B cell (primary cell): ENCODE measurements at regions of chr4 and their contacts with region 1.

Region 1: GRCh38 chr4:48047421-48047844 is 30.9 kb downstream of the NIPAL1 start:
- DNase-seq: peak; percentile 87
- ATAC-seq: peak; percentile 95
- H3K4me3 ChIP-seq: peak overlapping the region in 2 of 5 experiments; percentile 8 to 31
- H3K4me3 Mint-ChIP-seq: peak overlapping the region; percentile 57
- H3K27ac ChIP-seq: no peak overlapping the region
- H3K27ac Mint-ChIP-seq: peak overlapping the region; percentile 17
- H3K4me1 ChIP-seq: peaks cover 58 to 60% of the 10 kb centered on the region in 2 donors
- H3K4me1 Mint-ChIP-seq: peaks cover 59% of the 10 kb centered on the region
- H3K27me3 ChIP-seq: peaks cover 0 to 41% (median 19%) of the 10 kb centered on the region in 4 experiments
- H3K27me3 Mint-ChIP-seq: peaks cover 49% of the 10 kb centered on the region
- CTCF ChIP-seq: no peak

Region 2: GRCh38 chr4:47791965-47792364 is 255.5 kb before region 1 on chr4:
- CTCF ChIA-PET with region 1: no interaction called
- POLR2A ChIA-PET with region 1: no interaction called
- intact Hi-C with region 1: no loop called
- DNase-seq: no peak
- ATAC-seq: no peak
- H3K4me3 ChIP-seq: no peak overlapping the region
- H3K4me3 Mint-ChIP-seq: no peak overlapping the region
- H3K27ac ChIP-seq: no peak overlapping the region
- H3K27ac Mint-ChIP-seq: no peak overlapping the region
- H3K4me1 ChIP-seq: no peaks in the 10 kb centered on the region
- H3K4me1 Mint-ChIP-seq: peaks cover 3% of the 10 kb centered on the region
- H3K27me3 ChIP-seq: no peaks in the 10 kb centered on the region
- H3K27me3 Mint-ChIP-seq: peaks cover 4% of the 10 kb centered on the region
- CTCF ChIP-seq: no peak

Region 3: DNA sequence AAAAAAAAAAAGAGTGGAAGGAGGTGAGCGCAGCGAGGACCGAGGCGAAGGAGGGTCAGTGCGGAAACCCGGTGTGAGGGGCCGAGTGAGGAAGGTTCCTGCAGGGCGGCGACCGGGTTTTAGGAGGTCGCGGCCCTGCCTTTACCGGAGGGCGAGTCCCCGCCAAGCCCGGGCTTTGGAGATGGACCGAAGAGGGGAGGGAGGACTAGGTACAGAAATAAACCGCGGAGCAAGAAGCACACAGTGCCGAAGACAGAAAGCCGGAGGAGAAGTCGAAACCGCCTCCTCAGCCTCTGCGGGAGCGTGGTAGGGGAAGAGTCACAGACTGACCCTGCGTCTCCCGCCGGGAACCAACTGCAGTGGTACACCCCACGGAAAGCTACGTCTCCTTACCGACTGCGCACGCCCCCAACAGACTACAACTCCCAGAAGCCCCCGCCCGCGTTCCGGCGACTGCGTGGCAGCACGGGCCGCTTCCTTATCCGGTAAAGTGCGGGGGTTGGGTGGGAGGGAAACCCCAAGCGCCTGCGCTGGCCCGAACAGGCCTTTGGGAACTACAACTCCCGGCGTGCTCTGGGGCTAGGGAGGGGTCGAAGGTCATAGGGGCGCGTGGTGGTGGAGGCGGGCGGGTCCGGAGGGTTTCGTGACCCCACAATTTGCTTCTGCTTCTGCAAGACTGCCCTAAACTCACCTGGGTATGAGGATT is 133.1 kb before region 1 on chr4 and contains the start of gene NFXL1:
- CTCF ChIA-PET with region 1: no interaction called
- POLR2A ChIA-PET with region 1: no interaction called
- intact Hi-C with region 1: loop called (anchors 10 kb)
- DNase-seq: peak; percentile 95
- ATAC-seq: peak; percentile 94
- H3K4me3 ChIP-seq: peak within 1 kb of the TSS; percentile 85 to 100 (median 99)
- H3K4me3 Mint-ChIP-seq: peak within 1 kb of the TSS; percentile 99
- H3K27ac ChIP-seq: peak within 1 kb of the TSS; percentile 48 to 75
- H3K27ac Mint-ChIP-seq: peak within 1 kb of the TSS; percentile 97
- H3K4me1 ChIP-seq: peaks cover 14 to 17% of the 10 kb centered on the region in 2 donors
- H3K4me1 Mint-ChIP-seq: peaks cover 27% of the 10 kb centered on the region
- H3K27me3 ChIP-seq: no peaks in the 10 kb centered on the region
- H3K27me3 Mint-ChIP-seq: no peaks in the 10 kb centered on the region
- CTCF ChIP-seq: no peak
- total RNA-seq, gene NFXL1: 16.5 and 16.6 TPM in 2 replicates

Region 4: GRCh38 chr4:48008021-48008596 is 39.3 kb before region 1 on chr4:
- CTCF ChIA-PET with region 1: interaction called, 9 read pairs
- POLR2A ChIA-PET with region 1: interaction called, 12 read pairs
- intact Hi-C with region 1: loop called (anchors 5 kb)
- DNase-seq: no peak
- ATAC-seq: no peak
- H3K4me3 ChIP-seq: no peak overlapping the region
- H3K4me3 Mint-ChIP-seq: no peak overlapping the region
- H3K27ac ChIP-seq: no peak overlapping the region
- H3K27ac Mint-ChIP-seq: no peak overlapping the region
- H3K4me1 ChIP-seq: no peaks in the 10 kb centered on the region
- H3K4me1 Mint-ChIP-seq: no peaks in the 10 kb centered on the region
- H3K27me3 ChIP-seq: peaks cover 0 to 8% (median 4%) of the 10 kb centered on the region in 4 experiments
- H3K27me3 Mint-ChIP-seq: peaks cover 17% of the 10 kb centered on the region
- CTCF ChIP-seq: no peak

Region 5: GRCh38 chr4:48016141-48017103 is 31.0 kb before region 1 on chr4 and contains the starts of genes CNGA1 and NIPAL1:
- CTCF ChIA-PET with region 1: interaction called, 6 read pairs
- POLR2A ChIA-PET with region 1: interaction called, 12 read pairs
- intact Hi-C with region 1: loop called (anchors 5 kb)
- DNase-seq: peak; percentile 71
- ATAC-seq: peak; percentile 92
- H3K4me3 ChIP-seq: peak within 1 kb of the TSS; percentile 41 to 80 (median 66)
- H3K4me3 Mint-ChIP-seq: peak within 1 kb of the TSS; percentile 89
- H3K27ac ChIP-seq: no peak within 1 kb of the TSS
- H3K27ac Mint-ChIP-seq: peak within 1 kb of the TSS; percentile 50
- H3K4me1 ChIP-seq: peaks cover 15 to 18% of the 10 kb centered on the region in 2 donors
- H3K4me1 Mint-ChIP-seq: peaks cover 15% of the 10 kb centered on the region
- H3K27me3 ChIP-seq: peaks cover 2 to 49% (median 28%) of the 10 kb centered on the region in 4 experiments
- H3K27me3 Mint-ChIP-seq: peaks cover 45% of the 10 kb centered on the region
- CTCF ChIP-seq: peak; percentile 15
- total RNA-seq, gene CNGA1: not detected in 2 replicates
- total RNA-seq, gene NIPAL1: 1.1 TPM in 1 of 2 replicates, not detected in the other

Region 6: GRCh38 chr4:48033825-48034413 is 13.5 kb before region 1 on chr4:
- CTCF ChIA-PET with region 1: interaction called, 86 read pairs
- POLR2A ChIA-PET with region 1: no interaction called
- intact Hi-C with region 1: loop called (anchors 1 kb)
- DNase-seq: peak; percentile 83
- ATAC-seq: peak; percentile 69
- H3K4me3 ChIP-seq: no peak overlapping the region
- H3K4me3 Mint-ChIP-seq: no peak overlapping the region
- H3K27ac ChIP-seq: no peak overlapping the region
- H3K27ac Mint-ChIP-seq: no peak overlapping the region
- H3K4me1 ChIP-seq: peaks cover 35 to 37% of the 10 kb centered on the region in 2 donors
- H3K4me1 Mint-ChIP-seq: peaks cover 40% of the 10 kb centered on the region
- H3K27me3 ChIP-seq: no peaks in the 10 kb centered on the region
- H3K27me3 Mint-ChIP-seq: peaks cover 4% of the 10 kb centered on the region
- CTCF ChIP-seq: peak; percentile 77

Region 7: GRCh38 chr4:48195374-48195773 is 147.9 kb after region 1 on chr4:
- CTCF ChIA-PET with region 1: no interaction called
- POLR2A ChIA-PET with region 1: no interaction called
- intact Hi-C with region 1: loop called (anchors 10 kb)
- DNase-seq: no peak
- ATAC-seq: peak; percentile 12
- H3K4me3 ChIP-seq: peak overlapping the region in 1 of 5 experiments; percentile 38
- H3K4me3 Mint-ChIP-seq: peak overlapping the region; percentile 78
- H3K27ac ChIP-seq: peak overlapping the region; percentile 25 to 53
- H3K27ac Mint-ChIP-seq: peak overlapping the region; percentile 62
- H3K4me1 ChIP-seq: peaks cover 39 to 66% of the 10 kb centered on the region in 2 donors
- H3K4me1 Mint-ChIP-seq: peaks cover 74% of the 10 kb centered on the region
- H3K27me3 ChIP-seq: no peaks in the 10 kb centered on the region
- H3K27me3 Mint-ChIP-seq: no peaks in the 10 kb centered on the region
- CTCF ChIP-seq: no peak

Region 8: GRCh38 chr4:48296365-48296764 is 248.9 kb after region 1 on chr4:
- CTCF ChIA-PET with region 1: no interaction called
- POLR2A ChIA-PET with region 1: no interaction called
- intact Hi-C with region 1: no loop called
- DNase-seq: no peak
- ATAC-seq: peak; percentile 41
- H3K4me3 ChIP-seq: peak overlapping the region in 2 of 5 experiments; percentile 30 to 39
- H3K4me3 Mint-ChIP-seq: peak overlapping the region; percentile 66
- H3K27ac ChIP-seq: no peak overlapping the region
- H3K27ac Mint-ChIP-seq: no peak overlapping the region
- H3K4me1 ChIP-seq: no peaks in the 10 kb centered on the region
- H3K4me1 Mint-ChIP-seq: peaks cover 3% of the 10 kb centered on the region
- H3K27me3 ChIP-seq: no peaks in the 10 kb centered on the region
- H3K27me3 Mint-ChIP-seq: peaks cover 1% of the 10 kb centered on the region
- CTCF ChIP-seq: no peak

Region 9: DNA sequence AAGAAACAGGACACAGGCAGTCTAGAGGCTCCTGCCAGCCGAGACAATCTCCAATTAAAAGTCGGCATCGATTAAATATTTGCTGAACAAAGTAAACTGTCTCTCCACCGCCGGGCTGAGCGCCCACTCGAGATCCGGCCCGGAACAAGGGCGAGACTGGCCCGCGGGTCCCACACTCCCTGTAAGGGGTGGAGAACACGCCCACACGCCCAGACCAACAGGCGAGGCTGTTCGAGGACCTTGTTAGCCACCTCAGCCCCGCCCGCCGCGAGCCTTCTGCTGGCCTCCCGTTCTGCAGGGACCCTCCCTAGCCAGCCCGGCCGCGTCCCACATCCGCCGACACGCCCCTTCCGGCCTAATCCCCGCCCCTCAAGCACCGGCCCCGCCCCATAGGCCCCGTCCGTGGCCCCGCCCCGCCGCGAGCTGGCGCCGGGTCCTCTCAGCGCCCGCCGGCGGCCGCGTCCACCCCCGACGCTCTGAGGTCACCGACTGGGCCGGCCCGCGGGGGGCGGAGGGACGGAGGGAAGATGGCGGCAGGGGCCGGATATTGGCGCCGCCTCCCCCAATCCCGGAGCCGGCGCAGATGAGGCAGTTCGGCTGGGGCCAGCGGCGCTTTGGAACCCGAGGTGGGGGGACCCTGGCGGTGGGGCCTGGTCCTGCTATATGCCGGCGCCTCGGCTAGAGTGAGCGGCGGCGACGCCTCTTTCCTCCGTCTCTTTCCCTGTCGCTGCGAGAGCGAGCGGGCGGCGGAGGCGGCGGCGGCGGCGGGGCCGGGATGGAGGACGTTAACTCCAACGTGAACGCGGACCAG is 293.7 kb after region 1 on chr4 and contains the start of gene SLAIN2:
- CTCF ChIA-PET with region 1: no interaction called
- POLR2A ChIA-PET with region 1: no interaction called
- intact Hi-C with region 1: loop called (anchors 5 kb)
- DNase-seq: peak; percentile 98
- ATAC-seq: peak; percentile 88
- H3K4me3 ChIP-seq: peak within 1 kb of the TSS; percentile 79 to 96 (median 83)
- H3K4me3 Mint-ChIP-seq: peak within 1 kb of the TSS; percentile 96
- H3K27ac ChIP-seq: peak within 1 kb of the TSS; percentile 93 to 94
- H3K27ac Mint-ChIP-seq: peak within 1 kb of the TSS; percentile 98
- H3K4me1 ChIP-seq: peaks cover 23 to 28% of the 10 kb centered on the region in 2 donors
- H3K4me1 Mint-ChIP-seq: peaks cover 43% of the 10 kb centered on the region
- H3K27me3 ChIP-seq: no peaks in the 10 kb centered on the region
- H3K27me3 Mint-ChIP-seq: no peaks in the 10 kb centered on the region
- CTCF ChIP-seq: peak; percentile 60
- total RNA-seq, gene SLAIN2: 69.1 and 69.2 TPM in 2 replicates